Uterus (tissue), 4 donors: ENCODE measurements at regions of chr12 and their contacts with region 1.

Region 1: DNA sequence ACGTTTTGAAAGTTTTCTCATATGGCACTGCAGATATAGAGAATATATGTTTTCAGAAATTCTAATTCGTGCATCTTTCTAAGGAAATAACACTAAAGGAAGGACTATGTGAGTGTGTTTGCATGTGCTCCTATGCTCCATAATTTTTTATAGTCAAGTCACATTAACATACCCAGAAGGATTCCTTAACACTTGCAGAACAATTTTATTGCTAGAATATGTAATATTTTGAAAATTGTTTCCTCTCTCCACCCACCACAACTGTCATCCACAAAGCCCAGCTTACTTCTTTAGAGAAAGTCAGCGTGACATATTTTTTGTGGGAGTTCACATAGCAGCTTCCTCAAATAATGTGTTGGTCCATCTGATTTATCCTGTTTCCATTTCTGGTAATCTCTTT is 604.6 kb upstream of the MGAT4C start:
- DNase-seq: no peak
- H3K4me3 ChIP-seq: no peak overlapping the region
- H3K27ac ChIP-seq: no peak overlapping the region
- H3K4me1 ChIP-seq: no peaks in the 10 kb centered on the region
- H3K27me3 ChIP-seq: no peaks in the 10 kb centered on the region
- CTCF ChIP-seq: no peak
- POLR2A ChIP-seq: no peak

Region 2: GRCh38 chr12:87001102-87001501 is 140.3 kb after region 1 on chr12:
- intact Hi-C with region 1: loop called (anchors 5 kb)
- DNase-seq: no peak
- H3K4me3 ChIP-seq: no peak overlapping the region
- H3K27ac ChIP-seq: no peak overlapping the region
- H3K4me1 ChIP-seq: no peaks in the 10 kb centered on the region
- H3K27me3 ChIP-seq: no peaks in the 10 kb centered on the region
- CTCF ChIP-seq: no peak
- POLR2A ChIP-seq: no peak